Sigmoid colon (tissue), 7 donors: ENCODE measurements at regions of chr17 and their contacts with region 1.

Region 1: GRCh38 chr17:8138672-8139371 is 13.4 kb downstream of the PER1 start:
- DNase-seq: peak; percentile 98
- H3K4me3 ChIP-seq: peak overlapping the region in 3 of 4 donors; percentile 4 to 17 (median 8)
- H3K27ac ChIP-seq: peak overlapping the region; percentile 85 to 100 (median 94)
- H3K4me1 ChIP-seq: peaks cover 0 to 44% (median 29%) of the 10 kb centered on the region in 4 donors
- H3K27me3 ChIP-seq: no peaks in the 10 kb centered on the region
- CTCF ChIP-seq: peak in 3 of 4 experiments; percentile 82 to 98 (median 92)
- EP300 ChIP-seq: peak in 2 of 4 donors; percentile 46 to 96
- POLR2A ChIP-seq: peak; percentile 37 to 60

Region 2: GRCh38 chr17:7314719-7315569 is 823.9 kb before region 1 on chr17 and contains the start of gene GPS2:
- intact Hi-C with region 1: loop called (anchors 10 kb)
- DNase-seq: peak; percentile 96
- H3K4me3 ChIP-seq: peak within 1 kb of the TSS; percentile 80 to 89 (median 86)
- H3K27ac ChIP-seq: peak within 1 kb of the TSS; percentile 94 to 99 (median 96)
- H3K4me1 ChIP-seq: peaks cover 0 to 45% (median 36%) of the 10 kb centered on the region in 4 donors
- H3K27me3 ChIP-seq: no peaks in the 10 kb centered on the region
- CTCF ChIP-seq: no peak
- EP300 ChIP-seq: peak in 1 of 4 donors; percentile 46
- POLR2A ChIP-seq: peak; percentile 55 to 71
- total RNA-seq, gene GPS2: 82.3 to 114 (median 85.4) TPM

Region 3: GRCh38 chr17:8150194-8151122 is 11.6 kb after region 1 on chr17:
- intact Hi-C with region 1: loop called (anchors 1 kb)
- DNase-seq: peak; percentile 75
- H3K4me3 ChIP-seq: peak overlapping the region; percentile 79 to 97 (median 92)
- H3K27ac ChIP-seq: peak overlapping the region; percentile 99 to 100 (median 100)
- H3K4me1 ChIP-seq: peaks cover 0 to 66% (median 56%) of the 10 kb centered on the region in 4 donors
- H3K27me3 ChIP-seq: no peaks in the 10 kb centered on the region
- CTCF ChIP-seq: no peak
- EP300 ChIP-seq: no peak
- POLR2A ChIP-seq: peak in 1 of 2 donors; percentile 23

Region 4: GRCh38 chr17:8156246-8156992 is 17.6 kb after region 1 on chr17:
- intact Hi-C with region 1: loop called (anchors 1 kb)
- DNase-seq: peak; percentile 100
- H3K4me3 ChIP-seq: peak overlapping the region; percentile 93 to 97 (median 96)
- H3K27ac ChIP-seq: peak overlapping the region; percentile 99 to 100 (median 100)
- H3K4me1 ChIP-seq: peaks cover 0 to 58% (median 54%) of the 10 kb centered on the region in 4 donors
- H3K27me3 ChIP-seq: no peaks in the 10 kb centered on the region
- CTCF ChIP-seq: no peak
- EP300 ChIP-seq: peak; percentile 59 to 98 (median 77)
- POLR2A ChIP-seq: peak; percentile 100

Region 5: GRCh38 chr17:8189711-8190477 is 51.1 kb after region 1 on chr17 and contains the start of gene BORCS6:
- intact Hi-C with region 1: loop called (anchors 1 kb)
- DNase-seq: peak; percentile 100
- H3K4me3 ChIP-seq: peak within 1 kb of the TSS; percentile 54 to 78 (median 68)
- H3K27ac ChIP-seq: peak within 1 kb of the TSS; percentile 81 to 99 (median 96)
- H3K4me1 ChIP-seq: peaks cover 0 to 53% (median 41%) of the 10 kb centered on the region in 4 donors
- H3K27me3 ChIP-seq: no peaks in the 10 kb centered on the region
- CTCF ChIP-seq: no peak
- EP300 ChIP-seq: peak in 1 of 4 donors; percentile 26
- POLR2A ChIP-seq: peak; percentile 78 to 84
- total RNA-seq, gene BORCS6: 7.7 to 17.7 (median 15.8) TPM

Region 6: GRCh38 chr17:8753976-8754440 is 615.2 kb after region 1 on chr17:
- intact Hi-C with region 1: no loop called
- DNase-seq: no peak
- H3K4me3 ChIP-seq: no peak overlapping the region
- H3K27ac ChIP-seq: no peak overlapping the region
- H3K4me1 ChIP-seq: no peaks in the 10 kb centered on the region
- H3K27me3 ChIP-seq: peaks cover 0 to 6% (median 2%) of the 10 kb centered on the region in 3 donors
- CTCF ChIP-seq: no peak
- EP300 ChIP-seq: no peak
- POLR2A ChIP-seq: no peak